ENCODE measurements at regions of chr4 and their contacts with region 1.

Region 1: GRCh38 chr4:1899149-1900086 is 28.2 kb downstream of the NSD2 start:
- DNase-seq: peak; percentile 87
- CTCF ChIP-seq: peak; percentile 86

Region 2: DNA sequence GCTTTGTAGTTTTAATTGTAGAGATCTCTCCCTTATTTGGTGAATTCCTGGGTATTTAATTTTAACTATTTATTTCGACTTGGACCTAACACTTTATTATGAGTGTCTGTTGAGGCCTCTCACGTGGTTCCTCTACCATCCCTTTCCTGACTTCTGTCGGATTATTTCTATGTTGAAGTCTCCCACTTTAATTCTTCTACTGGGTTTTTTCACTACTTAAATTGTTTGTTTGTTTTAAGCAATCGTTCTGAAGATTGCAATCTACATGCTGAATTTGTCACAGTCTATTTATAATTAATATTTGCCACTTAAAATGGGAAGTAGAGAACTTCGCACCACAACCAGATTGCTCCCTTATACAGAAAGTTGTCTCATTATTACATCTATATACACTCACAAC is 472.4 kb before region 1 on chr4:
- CTCF ChIA-PET with region 1: no interaction called
- POLR2A ChIA-PET with region 1: no interaction called
- DNase-seq: no peak
- CTCF ChIP-seq: no peak

Region 3: DNA sequence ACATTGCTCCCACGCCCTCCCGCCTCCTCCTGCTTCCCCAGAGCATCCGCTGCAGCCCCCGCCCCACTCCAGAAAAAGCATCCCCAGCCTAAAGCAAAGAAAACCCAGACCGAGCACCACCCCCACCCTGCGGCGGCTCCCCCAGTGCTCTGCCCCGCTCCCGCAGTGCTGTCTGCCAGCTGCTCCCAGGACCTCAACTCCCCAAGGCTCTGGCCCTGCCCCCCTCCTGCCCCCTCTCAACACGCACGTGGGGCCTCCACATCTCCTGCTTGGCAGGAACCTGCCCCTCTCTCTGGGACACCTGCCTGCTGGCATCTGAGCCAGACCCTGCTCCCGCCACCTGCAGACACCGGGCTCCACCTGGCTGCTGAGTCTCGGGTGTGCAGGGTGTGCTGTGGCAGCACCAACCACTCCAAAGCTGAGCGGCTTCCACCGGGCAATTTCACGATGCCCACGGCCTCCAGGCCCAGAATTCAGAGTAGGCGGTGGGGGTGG is 294.7 kb before region 1 on chr4:
- CTCF ChIA-PET with region 1: no interaction called
- POLR2A ChIA-PET with region 1: no interaction called
- DNase-seq: no peak
- CTCF ChIP-seq: peak; percentile 15

Region 4: DNA sequence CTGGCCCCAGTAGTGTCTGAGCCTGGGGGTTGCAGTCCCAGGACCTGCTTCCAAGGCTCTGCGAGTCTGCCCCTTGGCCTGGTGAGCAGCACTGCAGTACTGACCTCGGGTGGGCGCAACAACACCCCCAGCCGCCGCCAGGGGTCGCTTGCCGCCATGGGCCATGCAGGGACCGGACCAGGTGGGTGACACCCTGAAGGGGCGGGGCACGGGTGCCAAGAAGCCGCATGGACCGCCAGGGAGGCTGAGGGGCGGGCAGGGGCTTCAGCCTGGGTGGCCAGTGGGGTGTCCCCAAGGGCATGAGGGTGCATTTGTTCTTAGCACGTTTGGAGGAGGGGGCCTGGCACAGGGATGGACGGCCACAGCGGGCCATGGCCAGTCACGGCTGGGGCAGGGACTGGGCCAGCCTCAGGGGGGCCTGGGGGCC is 153.1 kb before region 1 on chr4:
- CTCF ChIA-PET with region 1: interaction called, 67 read pairs
- POLR2A ChIA-PET with region 1: no interaction called
- DNase-seq: peak; percentile 86
- CTCF ChIP-seq: peak; percentile 83

Region 5: GRCh38 chr4:1786544-1787362 is 112.7 kb before region 1 on chr4:
- CTCF ChIA-PET with region 1: no interaction called
- POLR2A ChIA-PET with region 1: no interaction called
- DNase-seq: no peak
- CTCF ChIP-seq: no peak

Region 6: GRCh38 chr4:1834047-1834775 is 65.2 kb before region 1 on chr4:
- CTCF ChIA-PET with region 1: interaction called, 42 read pairs
- POLR2A ChIA-PET with region 1: no interaction called
- DNase-seq: peak; percentile 88
- CTCF ChIP-seq: no peak

Region 7: GRCh38 chr4:1856042-1856788 is 43.2 kb before region 1 on chr4 and contains the start of gene LETM1:
- CTCF ChIA-PET with region 1: interaction called, 12 read pairs
- POLR2A ChIA-PET with region 1: no interaction called
- DNase-seq: peak; percentile 96
- CTCF ChIP-seq: no peak

Region 8: DNA sequence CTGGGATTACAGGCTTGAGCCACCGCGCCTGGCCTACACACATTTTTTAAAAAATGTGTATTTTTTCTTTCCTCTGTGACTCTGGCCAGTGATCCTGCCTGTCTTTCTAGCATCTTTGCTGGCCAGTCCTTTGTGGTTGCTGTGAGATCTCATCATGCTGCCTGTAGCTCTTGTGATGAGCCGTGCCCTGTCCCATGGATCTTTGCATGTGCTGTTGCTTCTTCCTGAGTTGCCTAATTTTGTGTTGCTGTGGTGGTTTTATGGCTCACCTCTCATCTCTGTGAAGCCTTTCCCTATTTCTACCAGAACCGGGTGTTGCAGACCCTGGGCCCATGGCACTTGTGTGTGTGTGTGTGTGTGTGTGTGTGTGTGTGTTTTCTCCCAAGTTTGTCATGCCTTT is 19.9 kb before region 1 on chr4:
- CTCF ChIA-PET with region 1: interaction called, 116 read pairs
- POLR2A ChIA-PET with region 1: no interaction called
- DNase-seq: no peak
- CTCF ChIP-seq: no peak

Region 9: DNA sequence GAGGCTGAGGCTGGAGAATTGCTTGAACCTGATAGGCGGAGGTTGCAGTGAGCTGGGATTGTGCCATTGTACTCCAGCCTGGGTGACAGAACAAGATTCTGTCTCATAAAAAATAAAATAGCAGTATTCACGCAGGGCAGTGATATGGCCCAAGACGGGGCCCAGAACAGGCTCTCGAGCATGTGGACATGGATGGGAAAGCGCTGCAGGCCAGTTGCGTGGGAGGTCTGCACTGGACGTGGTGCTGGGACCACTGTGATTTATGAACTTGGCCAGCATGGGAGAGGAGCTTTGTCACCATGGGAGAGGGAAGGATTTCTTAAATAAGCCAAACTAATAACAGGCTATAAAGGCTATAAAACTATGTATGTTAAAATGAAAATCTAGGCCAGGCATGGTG is 23.4 kb after region 1 on chr4:
- CTCF ChIA-PET with region 1: interaction called, 17 read pairs
- POLR2A ChIA-PET with region 1: no interaction called
- DNase-seq: no peak
- CTCF ChIP-seq: no peak